Activated naive CD4-positive, alpha-beta T cell treated with anti-CD3 and anti-CD28 coated beads for 36 hours (primary cell): ENCODE measurements at regions of chr4 and their contacts with region 1.

Region 1: DNA sequence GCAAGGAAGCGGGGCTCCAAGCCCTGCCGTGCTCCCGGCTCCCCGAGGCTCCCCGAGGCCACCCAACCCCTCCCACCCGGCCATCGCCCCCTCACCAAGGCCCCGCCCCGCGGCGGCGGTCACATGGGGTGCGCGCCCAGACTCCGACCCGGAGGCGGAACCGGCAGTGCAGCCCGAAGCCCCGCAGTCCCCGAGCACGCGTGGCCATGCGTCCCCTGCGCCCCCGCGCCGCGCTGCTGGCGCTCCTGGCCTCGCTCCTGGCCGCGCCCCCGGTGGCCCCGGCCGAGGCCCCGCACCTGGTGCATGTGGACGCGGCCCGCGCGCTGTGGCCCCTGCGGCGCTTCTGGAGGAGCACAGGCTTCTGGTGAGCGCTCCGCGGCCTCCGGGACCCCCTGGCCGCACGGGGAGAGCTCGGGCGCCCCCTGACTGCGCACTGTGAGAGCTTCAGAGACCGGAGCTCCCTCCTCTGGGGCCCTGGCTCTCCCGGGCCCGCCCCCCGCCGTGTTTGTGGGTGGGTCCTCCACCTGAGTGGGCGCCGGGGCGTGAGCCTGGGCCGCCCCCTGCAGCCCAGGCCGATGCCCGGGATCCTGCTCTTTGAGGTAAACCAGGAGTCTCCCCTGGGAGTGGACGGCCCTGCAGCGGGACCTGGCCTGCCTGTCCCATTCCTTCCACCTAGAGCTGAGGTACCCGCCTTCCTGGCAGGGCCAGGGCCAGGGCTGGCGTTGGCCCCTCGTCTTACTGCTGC is at the start of gene IDUA:
- DNase-seq: peak; percentile 87
- H3K4me3 Mint-ChIP-seq: peak within 1 kb of the TSS; percentile 91
- H3K27ac Mint-ChIP-seq: peak within 1 kb of the TSS; percentile 74
- H3K4me1 Mint-ChIP-seq: peaks cover 28% of the 10 kb centered on the region
- H3K27me3 Mint-ChIP-seq: no peaks in the 10 kb centered on the region
- total RNA-seq, gene IDUA: 9.5 to 10.5 TPM

Region 2: DNA sequence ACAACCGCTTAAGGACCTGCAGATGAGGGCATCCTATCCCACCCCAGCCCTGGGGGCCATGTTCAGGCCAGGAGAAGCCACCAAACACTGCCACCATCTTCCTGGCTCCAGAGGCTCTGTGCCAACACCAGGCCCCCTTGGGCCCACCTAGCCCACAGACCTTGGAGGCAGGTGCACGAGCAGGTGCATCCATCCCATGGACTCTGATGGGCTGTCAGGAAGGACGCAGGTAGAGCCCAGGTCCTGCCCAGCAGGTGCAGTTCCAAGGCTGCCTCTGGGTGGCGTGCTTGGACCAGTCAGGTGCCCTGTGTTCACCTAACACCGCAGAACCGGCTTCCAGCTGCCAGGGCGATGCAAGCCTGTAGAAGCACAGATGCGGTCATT is 384.5 kb before region 1 on chr4:
- CTCF ChIA-PET with region 1: no interaction called
- intact Hi-C with region 1: loop called (anchors 5 kb)
- DNase-seq: peak; percentile 86
- H3K4me3 Mint-ChIP-seq: no peak overlapping the region
- H3K27ac Mint-ChIP-seq: no peak overlapping the region
- H3K4me1 Mint-ChIP-seq: peaks cover 2% of the 10 kb centered on the region
- H3K27me3 Mint-ChIP-seq: peaks cover 12% of the 10 kb centered on the region

Region 3: DNA sequence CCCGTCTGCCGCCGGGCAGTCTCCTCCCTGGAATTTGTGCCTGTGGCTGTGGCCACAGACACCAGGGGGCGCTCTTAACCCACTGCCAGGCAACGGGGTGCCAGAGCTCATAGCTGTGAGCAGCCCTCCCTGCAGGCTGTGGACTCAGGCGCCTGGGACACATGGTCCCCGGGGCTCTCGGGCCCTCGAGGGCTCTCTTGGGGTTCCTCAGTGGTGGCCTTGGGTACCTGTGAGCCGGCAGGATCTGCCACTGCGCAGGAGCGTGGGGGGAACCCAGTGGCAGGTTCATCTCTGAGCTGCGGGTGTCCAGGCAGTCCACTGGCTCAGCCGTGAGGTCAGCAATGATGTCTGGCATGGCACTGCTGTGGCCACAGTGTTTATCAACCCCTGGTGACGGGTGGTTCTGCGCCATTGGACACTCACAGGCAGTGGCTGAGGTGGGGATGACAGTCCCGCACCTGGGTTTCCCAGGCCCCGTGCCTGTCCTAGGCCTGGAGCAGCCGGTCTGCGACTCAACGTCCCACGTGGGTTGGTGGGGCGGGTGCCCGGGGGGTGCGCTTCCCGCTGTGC is 244.2 kb before region 1 on chr4:
- CTCF ChIA-PET with region 1: interaction called, 10 read pairs
- intact Hi-C with region 1: loop called (anchors 2 kb)
- DNase-seq: peak; percentile 85
- H3K4me3 Mint-ChIP-seq: no peak overlapping the region
- H3K27ac Mint-ChIP-seq: no peak overlapping the region
- H3K4me1 Mint-ChIP-seq: peaks cover 1% of the 10 kb centered on the region
- H3K27me3 Mint-ChIP-seq: no peaks in the 10 kb centered on the region

Region 4: DNA sequence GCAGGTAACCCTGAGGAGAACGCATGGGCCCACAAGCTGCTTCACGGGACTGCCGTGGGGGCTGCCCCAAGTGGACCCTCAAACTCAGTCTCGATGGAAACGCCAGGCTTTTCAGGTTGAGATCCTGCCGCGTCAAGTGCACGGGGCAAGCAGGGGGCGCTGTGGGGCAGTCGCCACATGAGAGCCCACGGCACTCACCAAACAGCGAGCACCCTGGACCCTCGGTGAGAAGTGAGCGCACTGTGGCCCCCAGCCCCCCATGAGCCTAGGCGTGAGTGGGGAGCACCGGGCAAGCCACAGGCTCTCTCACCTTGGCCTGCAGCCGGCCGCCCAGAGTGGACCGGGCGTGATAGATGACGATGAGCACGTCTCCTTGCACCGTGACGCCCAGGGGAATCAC is 110.3 kb before region 1 on chr4:
- CTCF ChIA-PET with region 1: interaction called, 3 read pairs
- intact Hi-C with region 1: loop called (anchors 1 kb)
- DNase-seq: no peak
- H3K4me3 Mint-ChIP-seq: no peak overlapping the region
- H3K27ac Mint-ChIP-seq: no peak overlapping the region
- H3K4me1 Mint-ChIP-seq: peaks cover 27% of the 10 kb centered on the region
- H3K27me3 Mint-ChIP-seq: no peaks in the 10 kb centered on the region

Region 5: GRCh38 chr4:931960-932712 is 54.9 kb before region 1 on chr4 and contains the starts of genes GAK and TMEM175:
- CTCF ChIA-PET with region 1: interaction called, 9 read pairs
- intact Hi-C with region 1: loop called (anchors 1 kb)
- DNase-seq: peak; percentile 96
- H3K4me3 Mint-ChIP-seq: peak within 1 kb of the TSS; percentile 94
- H3K27ac Mint-ChIP-seq: peak within 1 kb of the TSS; percentile 90
- H3K4me1 Mint-ChIP-seq: peaks cover 45% of the 10 kb centered on the region
- H3K27me3 Mint-ChIP-seq: no peaks in the 10 kb centered on the region
- total RNA-seq, gene GAK: 87.6 to 96.8 TPM
- total RNA-seq, gene TMEM175: 13.9 to 15.8 TPM

Region 6: DNA sequence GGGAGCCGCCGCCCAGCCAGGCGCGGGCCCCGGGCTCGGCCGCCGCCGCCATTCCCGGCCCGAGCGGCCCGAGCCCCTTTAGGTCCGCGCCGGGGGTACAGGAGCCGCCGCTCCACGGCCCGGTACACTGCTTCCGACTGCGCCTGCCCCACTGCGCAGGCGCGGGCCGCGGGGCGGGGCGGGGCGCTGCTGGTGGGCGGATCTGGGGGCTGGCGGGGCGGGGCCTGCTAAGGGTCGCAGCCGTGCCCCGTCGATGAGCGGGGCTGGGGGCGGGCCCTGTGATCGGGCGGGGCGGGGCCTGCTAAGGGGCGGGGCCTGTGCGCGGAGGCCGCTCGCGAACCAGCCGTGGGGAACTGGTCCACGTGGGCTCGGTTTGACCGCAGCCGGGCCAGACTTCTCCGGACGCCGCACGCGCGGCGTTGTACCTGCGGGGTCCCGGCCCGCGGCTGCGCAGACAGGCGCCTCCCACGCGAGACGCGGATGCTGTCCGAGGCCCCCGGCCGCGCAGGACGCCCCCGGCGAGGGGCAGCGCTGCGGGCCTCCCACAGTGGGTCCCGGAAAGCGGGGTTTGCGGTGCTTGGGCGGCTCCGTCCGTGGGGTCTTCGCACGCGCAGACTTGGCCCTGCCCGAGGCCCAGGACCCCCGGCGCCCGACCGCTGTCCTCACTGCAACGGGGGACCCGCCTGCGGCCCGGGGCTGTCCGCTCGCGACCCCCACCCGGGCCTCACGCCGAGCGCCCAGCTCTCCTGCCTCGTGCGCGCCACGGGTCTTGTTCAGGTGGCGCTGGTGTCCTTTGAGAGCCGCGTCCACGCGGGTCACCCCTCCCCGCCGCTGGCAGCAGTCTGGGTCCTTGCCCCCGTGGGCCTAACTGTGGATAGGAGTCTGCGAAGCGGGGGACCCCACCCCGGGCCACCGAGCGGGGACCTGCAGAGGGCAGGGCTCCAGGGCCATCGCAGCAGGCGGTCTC is 13.3 kb before region 1 on chr4 and contains the start of gene DGKQ:
- CTCF ChIA-PET with region 1: interaction called, 3 read pairs
- intact Hi-C with region 1: loop called (anchors 1 kb)
- DNase-seq: peak; percentile 81
- H3K4me3 Mint-ChIP-seq: peak within 1 kb of the TSS; percentile 59
- H3K27ac Mint-ChIP-seq: no peak within 1 kb of the TSS
- H3K4me1 Mint-ChIP-seq: peaks cover 5% of the 10 kb centered on the region
- H3K27me3 Mint-ChIP-seq: no peaks in the 10 kb centered on the region
- total RNA-seq, gene DGKQ: 10.8 to 11.1 TPM